ENCODE measurements at regions of chr6 and their contacts with region 1.

Region 1: DNA sequence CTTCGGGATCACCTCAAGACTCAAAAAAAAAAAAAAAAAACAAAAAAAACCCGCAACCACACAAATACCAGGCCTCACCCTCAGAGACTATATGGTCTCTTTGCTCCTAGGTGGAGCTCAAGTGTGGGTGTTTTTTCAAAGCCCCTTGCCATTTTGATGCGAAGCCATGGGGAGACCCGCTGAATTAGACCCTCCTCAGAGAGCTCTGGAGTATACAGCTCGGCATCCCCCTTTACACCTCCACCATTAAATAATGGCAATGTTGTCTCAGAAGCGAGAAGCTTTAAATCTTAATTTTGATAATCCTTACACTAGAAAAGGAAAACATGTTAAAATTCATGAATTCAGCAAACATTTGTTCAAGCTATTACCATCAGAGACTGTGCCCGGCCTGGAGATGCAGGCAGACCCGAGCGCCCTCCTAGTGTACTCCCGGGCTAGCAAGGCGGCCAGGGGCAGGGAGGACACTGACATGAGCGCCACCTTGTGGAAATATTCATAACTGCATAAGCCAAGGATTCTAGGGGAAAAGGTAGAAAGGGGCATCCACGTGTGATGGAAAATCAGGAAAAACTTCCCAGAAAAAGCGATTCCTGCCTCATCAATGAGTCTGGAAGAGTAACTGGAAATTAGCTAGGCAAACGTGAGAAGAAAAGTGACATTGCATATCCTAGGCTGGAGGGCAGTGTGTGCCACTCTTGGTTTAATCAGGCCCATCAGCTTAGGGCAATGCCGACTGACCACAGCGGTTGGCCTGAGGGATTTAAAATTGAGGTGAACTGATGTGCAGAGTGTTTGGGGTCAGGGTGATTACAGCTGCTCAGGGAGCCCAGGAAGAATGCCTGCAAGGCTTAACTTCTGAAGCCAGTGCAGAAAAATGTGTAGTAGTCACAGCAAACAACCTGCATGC is 72.5 kb downstream of the B3GAT2 start:
- DNase-seq: peak; percentile 72 to 84 (median 80)
- ATAC-seq: peak; percentile 97
- H3K4me3 ChIP-seq: no peak overlapping the region
- H3K27ac ChIP-seq: no peak overlapping the region
- H3K4me1 ChIP-seq: no peaks in the 10 kb centered on the region
- H3K27me3 ChIP-seq: peaks cover 4 to 22% of the 10 kb centered on the region in 2 experiments; a peak in 2 of 5 replicates
- CTCF ChIP-seq: peak; percentile 88 to 94 (median 92)
- EP300 ChIP-seq: no peak
- POLR2A ChIP-seq: no peak
- RAD21 ChIP-seq: peak; percentile 85 to 90

Region 2: GRCh38 chr6:70310063-70310694 is 574.1 kb before region 1 on chr6:
- CTCF ChIA-PET with region 1: interaction called, 6 read pairs
- POLR2A ChIA-PET with region 1: no interaction called
- in situ Hi-C with region 1: no loop called
- intact Hi-C with region 1: loop called (anchors 5 kb)
- DNase-seq: peak in 3 of 4 experiments; percentile 14 to 66 (median 20)
- ATAC-seq: peak; percentile 73
- H3K4me3 ChIP-seq: no peak overlapping the region
- H3K27ac ChIP-seq: no peak overlapping the region
- H3K4me1 ChIP-seq: no peaks in the 10 kb centered on the region; a peak in 1 of 5 replicates
- H3K27me3 ChIP-seq: peaks cover 0 to 8% of the 10 kb centered on the region in 2 experiments; a peak in 2 of 5 replicates
- CTCF ChIP-seq: peak; percentile 54 to 90 (median 70); a peak in 5 of 6 replicates
- EP300 ChIP-seq: no peak
- POLR2A ChIP-seq: no peak
- RAD21 ChIP-seq: peak; percentile 93 to 97

Region 3: DNA sequence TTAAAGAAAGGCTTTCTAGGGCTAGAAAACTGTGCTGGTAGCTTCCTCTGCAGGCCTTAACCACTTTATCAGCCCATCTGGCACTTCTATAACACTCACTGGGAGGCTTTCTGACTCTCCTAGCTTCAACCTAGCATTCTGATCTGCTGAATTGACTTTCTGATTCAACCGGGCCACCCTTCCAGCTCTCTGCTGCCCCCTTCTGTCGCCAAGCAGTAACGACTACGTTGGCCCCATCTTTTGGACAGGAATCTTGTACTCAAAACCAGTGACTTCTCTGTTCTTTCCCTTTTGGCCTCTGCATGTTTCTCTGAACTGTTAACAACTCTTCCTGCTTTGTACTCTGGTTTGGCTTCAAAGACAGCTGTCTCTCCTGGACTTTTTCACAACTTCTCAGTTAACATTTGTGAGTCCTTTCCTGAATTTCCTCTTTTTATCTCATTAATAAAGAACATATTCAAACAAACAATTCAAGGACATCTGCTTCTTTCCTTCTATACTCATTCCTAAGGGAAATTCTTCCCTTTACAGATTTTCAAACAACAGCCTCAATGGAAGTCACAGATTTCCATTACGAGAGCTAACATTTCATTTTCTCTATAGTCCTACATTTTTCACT is 514.9 kb before region 1 on chr6:
- CTCF ChIA-PET with region 1: interaction called, 3 read pairs
- POLR2A ChIA-PET with region 1: no interaction called
- in situ Hi-C with region 1: no loop called
- intact Hi-C with region 1: loop called (anchors 10 kb)
- DNase-seq: peak; percentile 76 to 84 (median 77)
- ATAC-seq: peak; percentile 93
- H3K4me3 ChIP-seq: no peak overlapping the region
- H3K27ac ChIP-seq: no peak overlapping the region
- H3K4me1 ChIP-seq: peaks cover 0 to 2% of the 10 kb centered on the region in 2 experiments; a peak in 1 of 5 replicates
- H3K27me3 ChIP-seq: peaks cover 6% of the 10 kb centered on the region in 2 experiments; a peak in 2 of 5 replicates
- CTCF ChIP-seq: peak; percentile 94 to 98 (median 94)
- EP300 ChIP-seq: no peak
- POLR2A ChIP-seq: no peak
- RAD21 ChIP-seq: peak; percentile 96 to 98

Region 4: DNA sequence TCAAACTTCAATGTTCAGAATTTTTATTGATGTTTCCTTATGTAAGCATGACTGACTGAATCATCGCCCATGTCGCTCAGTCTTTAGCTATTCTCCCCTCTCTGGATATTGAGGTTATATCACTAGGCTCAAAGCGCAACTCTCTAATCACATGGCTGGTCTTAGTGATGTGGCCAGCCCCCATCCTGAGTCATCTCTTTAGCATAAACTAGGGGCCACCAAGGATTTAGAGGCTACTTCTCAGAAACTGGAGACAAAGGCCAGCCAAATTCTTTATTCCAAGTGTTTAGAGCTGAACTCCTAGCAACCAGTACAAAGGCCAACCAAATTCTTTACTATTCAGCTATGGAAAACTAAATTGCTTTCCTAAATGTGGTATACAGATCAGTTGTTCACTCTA is 409.6 kb before region 1 on chr6:
- CTCF ChIA-PET with region 1: no interaction called
- POLR2A ChIA-PET with region 1: no interaction called
- in situ Hi-C with region 1: no loop called
- intact Hi-C with region 1: no loop called
- DNase-seq: peak in 3 of 4 experiments; percentile 8 to 22 (median 12)
- ATAC-seq: no peak
- H3K4me3 ChIP-seq: no peak overlapping the region
- H3K27ac ChIP-seq: no peak overlapping the region
- H3K4me1 ChIP-seq: no peaks in the 10 kb centered on the region
- H3K27me3 ChIP-seq: no peaks in the 10 kb centered on the region
- CTCF ChIP-seq: no peak
- EP300 ChIP-seq: no peak
- POLR2A ChIP-seq: no peak
- RAD21 ChIP-seq: no peak

Region 5: GRCh38 chr6:70520575-70520974 is 363.8 kb before region 1 on chr6:
- CTCF ChIA-PET with region 1: interaction called, 17 read pairs
- POLR2A ChIA-PET with region 1: no interaction called
- in situ Hi-C with region 1: loop called (anchors 25 kb)
- intact Hi-C with region 1: loop called (anchors 1 kb)
- DNase-seq: peak in 3 of 4 experiments; percentile 7 to 17 (median 9)
- ATAC-seq: peak; percentile 69
- H3K4me3 ChIP-seq: no peak overlapping the region
- H3K27ac ChIP-seq: no peak overlapping the region
- H3K4me1 ChIP-seq: no peaks in the 10 kb centered on the region
- H3K27me3 ChIP-seq: no peaks in the 10 kb centered on the region
- CTCF ChIP-seq: peak; percentile 22 to 62 (median 31); a peak in 4 of 6 replicates
- EP300 ChIP-seq: no peak
- POLR2A ChIP-seq: no peak
- RAD21 ChIP-seq: peak; percentile 71 to 76

Region 6: DNA sequence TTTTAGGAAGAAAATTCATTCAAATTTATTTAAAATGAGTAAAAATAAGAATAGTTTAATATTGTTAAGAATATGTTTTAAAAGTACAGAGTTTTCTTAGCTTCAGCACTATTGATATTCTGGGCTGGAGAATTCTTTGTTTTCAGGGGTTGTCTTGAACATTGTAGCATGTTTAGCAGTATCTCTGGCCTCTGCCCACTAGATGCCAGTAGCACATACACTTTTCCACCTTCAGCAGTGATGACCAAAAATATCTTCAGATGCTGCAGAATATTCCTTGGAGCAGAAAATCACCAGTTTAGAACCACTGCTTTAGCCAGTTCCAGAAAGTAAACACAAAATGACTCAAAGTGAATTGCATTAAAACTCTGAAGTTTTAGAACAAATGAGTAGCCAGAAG is 337.0 kb before region 1 on chr6:
- CTCF ChIA-PET with region 1: interaction called, 3 read pairs
- POLR2A ChIA-PET with region 1: no interaction called
- in situ Hi-C with region 1: loop called (anchors 25 kb)
- intact Hi-C with region 1: no loop called
- DNase-seq: no peak
- ATAC-seq: peak; percentile 72
- H3K4me3 ChIP-seq: no peak overlapping the region
- H3K27ac ChIP-seq: no peak overlapping the region
- H3K4me1 ChIP-seq: no peaks in the 10 kb centered on the region
- H3K27me3 ChIP-seq: no peaks in the 10 kb centered on the region
- CTCF ChIP-seq: peak; percentile 23 to 51 (median 30); a peak in 3 of 6 replicates
- EP300 ChIP-seq: no peak
- POLR2A ChIP-seq: no peak
- RAD21 ChIP-seq: peak; percentile 50 to 53

Region 7: GRCh38 chr6:70706491-70707123 is 177.7 kb before region 1 on chr6:
- CTCF ChIA-PET with region 1: interaction called, 20 read pairs
- POLR2A ChIA-PET with region 1: no interaction called
- in situ Hi-C with region 1: loop called (anchors 5 kb)
- intact Hi-C with region 1: loop called (anchors 1 kb)
- DNase-seq: peak in 3 of 4 experiments; percentile 10 to 49 (median 13)
- ATAC-seq: no peak
- H3K4me3 ChIP-seq: no peak overlapping the region
- H3K27ac ChIP-seq: no peak overlapping the region
- H3K4me1 ChIP-seq: no peaks in the 10 kb centered on the region
- H3K27me3 ChIP-seq: no peaks in the 10 kb centered on the region
- CTCF ChIP-seq: peak in 2 of 3 experiments; percentile 42 to 74; a peak in 3 of 6 replicates
- EP300 ChIP-seq: no peak
- POLR2A ChIP-seq: no peak
- RAD21 ChIP-seq: peak; percentile 64 to 78

Region 8: DNA sequence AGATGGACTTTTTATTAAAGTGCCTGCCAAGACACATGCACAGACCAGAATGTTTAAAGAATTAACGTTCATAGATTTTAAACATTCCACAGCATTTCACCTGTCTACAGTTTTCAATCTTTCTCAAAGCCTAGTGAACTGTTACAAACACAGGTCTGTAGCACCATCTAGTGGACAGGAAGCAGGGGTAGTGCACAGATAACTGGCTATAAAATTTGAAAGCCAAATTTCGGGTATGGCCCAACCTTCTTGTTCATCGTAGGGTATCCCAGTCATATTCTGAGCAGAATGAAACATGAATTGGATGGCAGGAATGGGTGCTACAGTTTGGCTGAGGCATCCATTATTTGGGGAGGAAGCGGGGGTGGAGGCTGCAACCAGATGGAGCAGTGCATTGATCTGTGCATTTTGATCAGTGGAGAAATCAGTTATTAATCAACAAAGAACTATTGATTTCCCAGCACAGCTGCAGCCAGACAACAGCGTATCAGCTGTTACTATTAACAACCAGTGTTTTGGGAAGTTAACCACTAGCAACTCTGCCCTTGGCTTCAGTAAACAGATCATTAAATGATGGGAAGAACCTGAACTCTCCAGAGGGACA is 128.6 kb after region 1 on chr6:
- CTCF ChIA-PET with region 1: no interaction called
- POLR2A ChIA-PET with region 1: no interaction called
- in situ Hi-C with region 1: no loop called
- intact Hi-C with region 1: loop called (anchors 10 kb)
- DNase-seq: peak; percentile 57 to 70 (median 64)
- ATAC-seq: peak; percentile 93
- H3K4me3 ChIP-seq: no peak overlapping the region
- H3K27ac ChIP-seq: no peak overlapping the region
- H3K4me1 ChIP-seq: no peaks in the 10 kb centered on the region
- H3K27me3 ChIP-seq: no peaks in the 10 kb centered on the region
- CTCF ChIP-seq: peak; percentile 64 to 76 (median 71)
- EP300 ChIP-seq: no peak
- POLR2A ChIP-seq: no peak
- RAD21 ChIP-seq: peak; percentile 72 to 83